Panc1 (cell line): ENCODE measurements at regions of chr22 and their contacts with region 1.

Region 1: GRCh38 chr22:36425977-36426523 is 38.3 kb upstream of the MYH9 start:
- DNase-seq: no peak
- ATAC-seq: peak; percentile 90
- H3K4me3 ChIP-seq: no peak overlapping the region
- H3K27ac ChIP-seq: peak overlapping the region; percentile 86
- H3K4me1 ChIP-seq: peaks cover 17% of the 10 kb centered on the region
- H3K27me3 ChIP-seq: no peaks in the 10 kb centered on the region
- CTCF ChIP-seq: no peak

Region 2: GRCh38 chr22:36387752-36388518 is 38.1 kb before region 1 on chr22 and contains the start of gene MYH9:
- CTCF ChIA-PET with region 1: no interaction called
- POLR2A ChIA-PET with region 1: interaction called, 10 read pairs
- in situ Hi-C with region 1: no loop called
- intact Hi-C with region 1: no loop called
- DNase-seq: peak; percentile 96
- ATAC-seq: peak; percentile 88
- H3K4me3 ChIP-seq: peak within 1 kb of the TSS; percentile 85 to 95
- H3K27ac ChIP-seq: peak within 1 kb of the TSS; percentile 95
- H3K4me1 ChIP-seq: peaks cover 7% of the 10 kb centered on the region
- H3K27me3 ChIP-seq: no peaks in the 10 kb centered on the region
- CTCF ChIP-seq: no peak
- total RNA-seq, gene MYH9: 788 TPM

Region 3: GRCh38 chr22:36445158-36445668 is 19.2 kb after region 1 on chr22:
- CTCF ChIA-PET with region 1: no interaction called
- POLR2A ChIA-PET with region 1: interaction called, 10 read pairs
- in situ Hi-C with region 1: no loop called
- intact Hi-C with region 1: no loop called
- DNase-seq: no peak
- ATAC-seq: no peak
- H3K4me3 ChIP-seq: no peak overlapping the region
- H3K27ac ChIP-seq: peak overlapping the region; percentile 1; the same call in 1 of the 2 replicates
- H3K4me1 ChIP-seq: peaks cover 3% of the 10 kb centered on the region
- H3K27me3 ChIP-seq: no peaks in the 10 kb centered on the region
- CTCF ChIP-seq: no peak